Right cardiac atrium (tissue), 5 donors: ENCODE measurements at regions of chr1 and their contacts with region 1.

Region 1: DNA sequence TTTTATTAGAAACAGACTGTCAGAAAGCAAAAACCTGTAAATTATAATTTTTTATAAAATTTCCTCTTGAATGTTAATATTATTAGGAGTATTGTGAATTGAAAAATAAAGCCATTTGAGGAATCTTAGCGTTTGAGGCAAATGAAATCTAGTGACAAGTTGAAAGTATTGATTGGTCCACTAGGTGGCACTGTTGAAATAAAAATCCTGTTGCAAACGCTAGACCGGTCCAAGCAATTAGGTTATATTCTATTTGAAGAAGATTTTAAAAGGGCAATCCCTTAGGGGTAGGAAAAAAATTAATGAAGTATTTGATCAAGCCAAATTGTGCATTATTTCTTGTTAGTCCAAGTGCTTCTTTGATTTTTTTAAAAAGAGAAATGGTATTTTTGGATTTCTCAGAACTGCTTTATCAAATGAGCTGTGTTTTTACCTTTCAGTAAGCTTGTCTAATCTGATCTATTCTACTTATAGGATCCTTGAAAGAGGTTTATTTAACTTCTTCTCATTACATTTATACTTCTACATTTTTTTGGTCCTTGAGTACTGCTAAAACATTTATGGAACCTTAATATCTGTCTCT is 57.7 kb downstream of the ATG4C start:
- DNase-seq: no peak
- ATAC-seq: peak; percentile 36 to 53
- H3K4me3 ChIP-seq: no peak overlapping the region
- H3K27ac ChIP-seq: no peak overlapping the region
- H3K4me1 ChIP-seq: no peaks in the 10 kb centered on the region
- H3K27me3 ChIP-seq: no peaks in the 10 kb centered on the region

Region 2: GRCh38 chr1:62746085-62746808 is 95.4 kb before region 1 on chr1:
- intact Hi-C with region 1: no loop called
- DNase-seq: no peak
- ATAC-seq: peak in 1 of 2 donors; percentile 38
- H3K4me3 ChIP-seq: no peak overlapping the region
- H3K27ac ChIP-seq: no peak overlapping the region
- H3K4me1 ChIP-seq: no peaks in the 10 kb centered on the region
- H3K27me3 ChIP-seq: no peaks in the 10 kb centered on the region

Region 3: DNA sequence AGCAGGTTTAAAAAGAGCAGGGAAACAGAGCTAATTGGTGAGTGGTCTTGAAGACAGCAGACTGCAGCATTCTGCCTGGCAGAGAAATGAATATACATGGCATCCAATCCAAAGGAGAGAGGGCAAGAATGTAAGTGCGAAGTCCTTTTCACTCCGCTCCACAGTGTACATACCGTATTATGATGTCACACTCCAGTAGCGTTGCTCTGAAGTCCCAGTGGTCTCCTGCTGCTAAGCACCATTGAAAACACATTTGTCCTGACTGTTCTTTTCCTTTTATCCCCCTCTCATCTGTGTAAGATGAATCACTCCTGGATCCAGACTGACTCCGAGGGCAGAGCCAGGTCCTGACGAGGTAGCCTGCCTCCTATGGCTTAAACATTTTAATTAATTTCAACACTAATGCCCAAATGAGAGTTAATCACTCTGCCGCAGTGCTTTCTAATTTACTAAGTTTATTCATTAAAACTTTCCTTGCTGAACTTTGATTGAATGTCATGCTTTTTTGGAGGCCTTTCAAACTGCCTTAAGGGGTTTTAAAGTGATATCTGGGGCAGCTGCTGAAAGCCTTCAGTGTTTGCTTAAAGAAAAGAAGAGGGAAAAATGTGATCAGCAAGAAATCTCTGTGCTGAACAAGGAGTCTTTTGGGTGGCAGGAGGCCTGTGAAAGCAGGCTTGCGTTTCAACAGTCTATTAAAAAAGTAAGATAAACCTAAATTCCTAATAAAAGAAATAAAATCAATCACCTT is 169.4 kb after region 1 on chr1:
- intact Hi-C with region 1: no loop called
- DNase-seq: no peak
- ATAC-seq: no peak
- H3K4me3 ChIP-seq: no peak overlapping the region
- H3K27ac ChIP-seq: no peak overlapping the region
- H3K4me1 ChIP-seq: no peaks in the 10 kb centered on the region
- H3K27me3 ChIP-seq: no peaks in the 10 kb centered on the region

Region 4: GRCh38 chr1:63442141-63442475 is 600.4 kb after region 1 on chr1:
- intact Hi-C with region 1: loop called in 1 of 4 experiments (anchors 5 kb)
- DNase-seq: no peak
- ATAC-seq: no peak
- H3K4me3 ChIP-seq: no peak overlapping the region
- H3K27ac ChIP-seq: no peak overlapping the region
- H3K4me1 ChIP-seq: no peaks in the 10 kb centered on the region
- H3K27me3 ChIP-seq: no peaks in the 10 kb centered on the region